ENCODE measurements at regions of chr5 and their contacts with region 1.

Region 1: DNA sequence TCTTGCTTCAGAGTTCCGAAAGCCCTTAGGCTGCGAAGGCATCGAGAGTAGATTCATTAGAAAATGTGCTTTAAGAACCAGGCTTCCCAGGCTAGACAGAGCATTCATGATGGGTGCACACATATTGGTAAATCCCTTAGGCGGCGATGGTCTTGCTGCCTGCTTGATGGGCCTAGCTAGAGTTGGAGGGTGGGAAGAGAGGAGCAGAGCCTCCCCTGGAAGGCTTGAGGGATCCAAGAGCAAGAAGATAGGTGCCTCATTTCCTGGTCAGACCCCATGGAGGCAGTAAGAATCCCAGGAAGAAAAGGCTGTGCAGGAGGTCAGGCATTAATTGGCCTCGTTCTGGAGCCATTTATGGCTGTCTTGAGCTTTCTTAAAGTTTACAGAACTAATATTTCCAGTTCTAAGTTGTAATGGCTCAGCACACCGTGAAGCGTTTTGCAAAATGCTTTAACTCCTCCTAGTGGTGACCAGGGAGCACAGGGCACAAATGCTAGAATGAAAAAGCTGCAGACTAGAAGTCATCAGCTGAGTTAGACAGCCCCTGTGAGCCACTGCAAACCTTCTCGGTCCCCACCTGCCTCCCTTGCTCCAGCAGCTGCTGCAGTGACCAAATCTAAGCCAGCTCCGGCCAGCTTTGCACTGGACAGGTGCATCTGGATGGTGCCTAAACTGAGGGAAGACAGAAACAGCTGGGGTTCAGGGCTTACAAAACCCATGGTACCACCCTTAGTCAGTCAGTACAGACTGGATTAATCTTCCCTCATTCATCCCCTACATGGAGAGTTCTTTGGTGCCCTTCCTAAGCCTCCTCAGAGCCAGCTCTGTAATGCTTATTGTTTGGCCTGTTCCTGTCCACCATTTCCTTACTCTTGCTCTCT is 14.7 kb downstream of the SLC45A2 start:
- DNase-seq: peak; percentile 47
- H3K4me3 ChIP-seq: no peak overlapping the region
- H3K27ac ChIP-seq: no peak overlapping the region
- H3K4me1 ChIP-seq: no peaks in the 10 kb centered on the region
- H3K27me3 ChIP-seq: peaks cover 2 to 3% of the 10 kb centered on the region in 2 experiments
- CTCF ChIP-seq: peak; percentile 64 to 65
- POLR2A ChIP-seq: no peak

Region 2: DNA sequence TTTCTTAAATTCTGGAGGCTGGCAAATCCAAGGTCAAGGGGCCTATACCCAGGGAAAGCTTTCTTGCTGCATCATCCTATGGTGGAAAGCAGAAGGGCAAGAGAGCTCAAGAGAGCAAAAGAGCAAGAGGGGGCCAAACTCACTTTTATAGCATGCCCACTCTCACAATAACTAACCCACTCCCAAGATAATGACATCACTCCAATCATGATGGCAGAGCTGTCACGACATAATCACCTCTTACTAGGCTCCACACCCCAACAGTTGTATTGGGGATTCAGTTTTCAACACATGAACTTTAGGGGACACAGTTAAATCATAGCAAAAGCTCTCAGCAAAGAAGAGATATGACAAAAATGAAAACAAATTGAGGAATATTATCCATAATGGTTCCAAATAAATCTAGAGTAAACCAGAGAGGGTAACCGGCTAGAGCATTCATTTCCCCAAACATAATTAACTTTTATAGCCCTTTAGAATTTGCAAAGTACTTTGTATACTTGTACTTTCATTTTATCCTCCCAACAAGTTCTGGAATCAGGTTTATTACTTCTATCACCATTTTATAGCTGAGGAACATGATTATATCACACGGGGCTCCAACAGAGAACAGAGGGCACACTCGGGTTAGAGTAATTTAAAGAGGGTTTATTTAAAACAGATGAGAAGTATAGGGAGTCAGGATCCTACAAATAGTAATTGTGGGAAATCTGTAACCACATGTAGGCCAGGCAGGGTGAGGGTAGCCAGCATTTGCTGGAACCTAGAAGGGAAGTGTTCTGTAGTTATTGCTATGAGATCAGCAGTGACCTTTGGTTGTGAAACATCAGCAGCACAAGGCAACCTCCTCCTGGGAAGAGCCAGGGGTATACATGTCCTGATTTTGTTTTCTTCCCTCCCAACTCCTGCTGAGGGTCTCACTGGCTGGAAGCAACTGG is 536.2 kb before region 1 on chr5:
- CTCF ChIA-PET with region 1: interaction called, 161 read pairs
- POLR2A ChIA-PET with region 1: no interaction called
- dilution Hi-C with region 1: no loop called
- intact Hi-C with region 1: loop called (anchors 1 kb)
- DNase-seq: no peak
- H3K4me3 ChIP-seq: no peak overlapping the region
- H3K27ac ChIP-seq: no peak overlapping the region
- H3K4me1 ChIP-seq: no peaks in the 10 kb centered on the region
- H3K27me3 ChIP-seq: no peaks in the 10 kb centered on the region
- CTCF ChIP-seq: no peak
- POLR2A ChIP-seq: no peak

Region 3: GRCh38 chr5:33460210-33460609 is 509.6 kb before region 1 on chr5:
- CTCF ChIA-PET with region 1: interaction called, 11 read pairs
- POLR2A ChIA-PET with region 1: no interaction called
- dilution Hi-C with region 1: no loop called
- intact Hi-C with region 1: no loop called
- DNase-seq: no peak
- H3K4me3 ChIP-seq: no peak overlapping the region
- H3K27ac ChIP-seq: no peak overlapping the region
- H3K4me1 ChIP-seq: no peaks in the 10 kb centered on the region
- H3K27me3 ChIP-seq: no peaks in the 10 kb centered on the region
- CTCF ChIP-seq: no peak
- POLR2A ChIP-seq: no peak

Region 4: GRCh38 chr5:33470544-33470943 is 499.3 kb before region 1 on chr5:
- CTCF ChIA-PET with region 1: interaction called, 48 read pairs
- POLR2A ChIA-PET with region 1: no interaction called
- dilution Hi-C with region 1: no loop called
- intact Hi-C with region 1: no loop called
- DNase-seq: peak; percentile 28
- H3K4me3 ChIP-seq: no peak overlapping the region
- H3K27ac ChIP-seq: no peak overlapping the region
- H3K4me1 ChIP-seq: no peaks in the 10 kb centered on the region
- H3K27me3 ChIP-seq: no peaks in the 10 kb centered on the region
- CTCF ChIP-seq: peak in 1 of 2 donors; percentile 14
- POLR2A ChIP-seq: no peak

Region 5: GRCh38 chr5:33588654-33589372 is 381.0 kb before region 1 on chr5:
- CTCF ChIA-PET with region 1: interaction called, 177 read pairs
- POLR2A ChIA-PET with region 1: no interaction called
- dilution Hi-C with region 1: no loop called
- intact Hi-C with region 1: loop called (anchors 1 kb)
- DNase-seq: peak; percentile 23
- H3K4me3 ChIP-seq: no peak overlapping the region
- H3K27ac ChIP-seq: no peak overlapping the region
- H3K4me1 ChIP-seq: no peaks in the 10 kb centered on the region
- H3K27me3 ChIP-seq: no peaks in the 10 kb centered on the region
- CTCF ChIP-seq: peak; percentile 67 to 89
- POLR2A ChIP-seq: no peak

Region 6: GRCh38 chr5:33958176-33958575 is 11.6 kb before region 1 on chr5:
- CTCF ChIA-PET with region 1: interaction called, 25 read pairs
- POLR2A ChIA-PET with region 1: no interaction called
- dilution Hi-C with region 1: no loop called
- intact Hi-C with region 1: no loop called
- DNase-seq: no peak
- H3K4me3 ChIP-seq: no peak overlapping the region
- H3K27ac ChIP-seq: no peak overlapping the region
- H3K4me1 ChIP-seq: no peaks in the 10 kb centered on the region
- H3K27me3 ChIP-seq: peaks cover 0 to 9% of the 10 kb centered on the region in 2 experiments
- CTCF ChIP-seq: no peak
- POLR2A ChIP-seq: no peak

Region 7: DNA sequence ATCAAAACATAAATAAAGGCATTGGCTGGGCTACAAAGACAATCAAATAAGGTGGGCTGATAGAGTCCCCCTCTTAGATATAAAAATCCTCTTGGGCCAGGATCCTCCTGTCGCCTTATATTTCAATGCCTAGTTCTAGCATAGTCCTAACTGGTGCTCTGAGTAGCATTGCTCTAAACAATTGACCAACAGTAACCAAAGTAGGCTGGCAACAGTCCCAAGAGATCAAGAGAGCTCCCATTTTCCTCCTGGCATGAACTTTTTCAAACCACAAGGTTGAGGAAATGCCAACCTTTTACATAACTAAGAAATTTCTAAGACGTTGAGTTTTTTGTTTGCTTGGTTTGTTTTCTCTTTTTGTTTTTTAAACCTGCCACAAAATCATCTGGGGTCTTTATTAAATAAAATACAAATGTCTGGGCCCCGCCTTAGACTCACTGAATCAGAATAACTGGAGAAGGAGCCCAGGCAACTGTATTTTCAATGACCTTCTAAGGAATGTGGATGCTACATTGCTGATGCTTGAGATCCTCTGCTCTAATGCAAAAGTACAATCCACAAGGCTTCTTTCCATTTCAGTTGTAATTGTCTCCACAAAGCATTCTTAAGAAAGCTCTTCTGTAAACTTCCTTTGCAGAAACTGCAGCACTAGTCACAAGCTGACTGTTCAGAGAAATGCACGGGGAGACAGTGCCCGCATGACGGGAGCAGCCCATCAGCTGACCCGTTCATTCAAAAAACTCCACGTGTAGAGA is 11.8 kb after region 1 on chr5:
- CTCF ChIA-PET with region 1: interaction called, 23 read pairs
- POLR2A ChIA-PET with region 1: no interaction called
- dilution Hi-C with region 1: no loop called
- intact Hi-C with region 1: no loop called
- DNase-seq: no peak
- H3K4me3 ChIP-seq: no peak overlapping the region
- H3K27ac ChIP-seq: no peak overlapping the region
- H3K4me1 ChIP-seq: no peaks in the 10 kb centered on the region
- H3K27me3 ChIP-seq: no peaks in the 10 kb centered on the region
- CTCF ChIP-seq: no peak
- POLR2A ChIP-seq: no peak

Region 8: DNA sequence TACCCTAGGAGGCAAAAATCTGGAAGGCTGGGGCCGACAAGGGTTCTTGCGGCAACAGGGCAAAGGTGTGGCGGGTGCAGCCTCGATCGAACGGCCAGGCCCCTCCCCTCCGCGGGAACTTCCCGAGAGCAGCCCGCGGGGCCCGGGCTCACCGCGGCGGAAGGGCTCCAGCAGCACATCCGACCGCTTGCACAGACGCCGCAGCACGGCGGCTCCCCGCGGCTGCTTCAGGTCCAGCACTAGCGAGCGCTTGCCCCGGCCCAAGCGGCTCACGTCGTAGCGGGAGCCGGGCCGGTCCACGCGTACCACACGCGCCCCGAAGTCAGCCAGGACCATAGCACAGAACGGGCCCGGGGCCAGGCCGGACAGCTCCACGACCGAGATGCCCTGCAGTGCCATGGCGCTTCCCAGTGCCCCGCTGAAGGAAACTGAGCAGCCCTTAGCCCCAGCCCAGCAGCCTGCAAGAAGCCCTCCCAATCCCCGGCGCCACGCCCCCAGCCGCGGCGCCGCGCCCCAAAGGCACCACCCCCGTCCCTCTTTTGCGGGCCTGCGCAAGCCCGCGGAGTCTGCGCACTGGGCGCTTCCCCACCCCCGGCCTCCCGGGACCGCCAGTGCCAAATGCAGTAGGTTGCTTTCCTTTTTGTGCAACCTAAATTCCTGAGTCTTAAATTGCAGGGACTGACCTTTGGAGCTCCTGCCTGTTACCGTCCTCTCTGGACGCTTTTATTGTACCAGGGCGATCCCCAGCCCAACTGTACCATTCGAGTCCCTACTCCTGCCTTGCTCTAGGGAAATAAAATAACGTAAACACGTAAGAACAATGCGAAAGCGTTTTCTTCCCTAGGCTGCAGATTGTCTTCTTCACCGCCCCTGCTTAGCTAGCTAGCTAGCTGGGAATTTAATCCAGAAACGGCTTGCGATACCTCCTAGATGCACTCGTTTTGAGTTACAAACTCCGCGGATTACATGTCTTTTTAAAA is 38.1 kb after region 1 on chr5 and contains the start of gene AMACR:
- CTCF ChIA-PET with region 1: no interaction called
- POLR2A ChIA-PET with region 1: no interaction called
- dilution Hi-C with region 1: no loop called
- intact Hi-C with region 1: no loop called
- DNase-seq: peak; percentile 93
- H3K4me3 ChIP-seq: peak within 1 kb of the TSS; percentile 46 to 76 (median 62)
- H3K27ac ChIP-seq: peak within 1 kb of the TSS; percentile 37
- H3K4me1 ChIP-seq: peaks cover 14% of the 10 kb centered on the region
- H3K27me3 ChIP-seq: no peaks in the 10 kb centered on the region
- CTCF ChIP-seq: peak in 1 of 2 donors; percentile 24
- POLR2A ChIP-seq: peak; percentile 98
- total RNA-seq, gene AMACR: 8.3 and 8.7 TPM in 2 replicates